Activated CD4-positive, alpha-beta T cell treated with anti-CD3 and anti-CD28 coated beads for 36 hours (primary cell): ENCODE measurements at regions of chr11 and their contacts with region 1.

Region 1: GRCh38 chr11:133927690-133928627 is 28.8 kb downstream of the IGSF9B start:
- DNase-seq: peak; percentile 84
- ATAC-seq: peak; percentile 28
- H3K4me3 Mint-ChIP-seq: peak overlapping the region; percentile 62
- H3K27ac Mint-ChIP-seq: peak overlapping the region; percentile 95
- H3K4me1 Mint-ChIP-seq: peaks cover 33% of the 10 kb centered on the region
- H3K27me3 Mint-ChIP-seq: no peaks in the 10 kb centered on the region

Region 2: DNA sequence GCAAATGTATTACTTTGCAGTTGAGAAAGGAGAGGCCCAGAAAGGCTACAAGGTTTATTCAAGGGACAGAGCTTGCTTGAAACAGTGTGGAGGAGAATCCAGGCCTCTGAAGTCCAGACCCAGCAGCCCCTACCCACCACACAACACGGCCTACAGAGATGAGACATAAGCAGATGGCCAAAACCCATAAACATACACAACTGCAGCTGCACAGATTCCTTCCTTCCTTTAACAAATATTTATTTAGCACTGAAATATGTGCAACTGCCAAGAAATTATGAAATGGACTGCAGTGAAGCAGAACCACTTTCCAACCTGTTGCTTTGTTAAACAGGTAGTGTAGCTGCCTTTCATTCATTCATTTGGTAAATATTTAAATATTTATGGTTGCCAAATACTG is 204.9 kb before region 1 on chr11:
- CTCF ChIA-PET with region 1: no interaction called
- POLR2A ChIA-PET with region 1: no interaction called
- intact Hi-C with region 1: no loop called
- DNase-seq: no peak
- ATAC-seq: no peak
- H3K4me3 Mint-ChIP-seq: no peak overlapping the region
- H3K27ac Mint-ChIP-seq: no peak overlapping the region
- H3K4me1 Mint-ChIP-seq: no peaks in the 10 kb centered on the region
- H3K27me3 Mint-ChIP-seq: no peaks in the 10 kb centered on the region

Region 3: GRCh38 chr11:133956650-133957633 is 29.0 kb after region 1 on chr11 and contains the start of gene IGSF9B:
- CTCF ChIA-PET with region 1: interaction called, 6 read pairs
- POLR2A ChIA-PET with region 1: interaction called, 6 read pairs
- intact Hi-C with region 1: loop called (anchors 1 kb)
- DNase-seq: peak; percentile 95
- ATAC-seq: peak; percentile 91
- H3K4me3 Mint-ChIP-seq: peak within 1 kb of the TSS; percentile 90
- H3K27ac Mint-ChIP-seq: peak within 1 kb of the TSS; percentile 87
- H3K4me1 Mint-ChIP-seq: peaks cover 49% of the 10 kb centered on the region
- H3K27me3 Mint-ChIP-seq: peaks cover 9% of the 10 kb centered on the region
- total RNA-seq, gene IGSF9B: 79.0 to 84.2 TPM

Region 4: DNA sequence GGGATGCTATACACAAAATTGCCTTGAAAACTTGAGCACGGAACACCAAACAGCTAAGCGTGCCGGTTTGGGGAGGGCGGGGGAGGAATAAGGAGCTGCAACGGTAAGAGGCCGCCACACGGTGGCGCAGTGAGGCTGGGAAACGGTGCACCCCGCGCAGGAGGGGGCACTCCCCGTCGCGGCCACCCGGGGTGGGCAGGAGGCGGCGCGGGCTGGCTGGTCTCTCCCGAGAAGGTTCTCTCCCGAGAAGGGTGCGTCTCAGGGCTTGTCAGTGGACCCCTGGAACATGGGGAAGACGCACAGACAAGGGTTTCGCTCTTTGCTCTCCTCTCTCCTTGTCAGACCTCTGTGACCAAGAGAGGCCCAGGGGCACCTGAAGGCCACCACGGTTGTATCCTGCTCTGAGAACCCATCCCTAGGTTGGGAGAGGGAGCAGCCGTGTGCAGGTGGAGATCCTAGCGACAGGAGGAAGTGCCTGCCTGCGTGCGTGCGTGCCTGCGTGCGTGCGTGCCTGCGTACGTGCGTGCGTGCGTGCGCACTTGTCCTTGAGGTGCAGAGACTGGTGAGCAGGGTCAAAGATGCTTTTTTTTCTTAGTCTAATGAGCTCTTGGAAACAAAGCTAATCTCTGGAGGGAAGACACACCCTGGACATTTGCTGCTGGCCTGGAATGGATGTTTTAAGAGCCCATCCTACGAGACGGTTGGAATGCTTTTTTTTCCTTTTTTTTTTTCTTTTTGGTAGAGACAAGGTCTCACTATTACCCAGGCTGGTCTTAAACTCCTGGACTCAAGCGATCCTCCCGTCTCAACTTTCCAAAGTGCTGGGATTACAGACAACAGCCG is 122.8 kb after region 1 on chr11:
- CTCF ChIA-PET with region 1: interaction called, 8 read pairs
- POLR2A ChIA-PET with region 1: interaction called, 7 read pairs
- intact Hi-C with region 1: loop called (anchors 1 to 5 kb)
- DNase-seq: peak; percentile 87
- ATAC-seq: peak; percentile 90
- H3K4me3 Mint-ChIP-seq: no peak overlapping the region
- H3K27ac Mint-ChIP-seq: no peak overlapping the region
- H3K4me1 Mint-ChIP-seq: peaks cover 7% of the 10 kb centered on the region
- H3K27me3 Mint-ChIP-seq: peaks cover 21% of the 10 kb centered on the region

Region 5: DNA sequence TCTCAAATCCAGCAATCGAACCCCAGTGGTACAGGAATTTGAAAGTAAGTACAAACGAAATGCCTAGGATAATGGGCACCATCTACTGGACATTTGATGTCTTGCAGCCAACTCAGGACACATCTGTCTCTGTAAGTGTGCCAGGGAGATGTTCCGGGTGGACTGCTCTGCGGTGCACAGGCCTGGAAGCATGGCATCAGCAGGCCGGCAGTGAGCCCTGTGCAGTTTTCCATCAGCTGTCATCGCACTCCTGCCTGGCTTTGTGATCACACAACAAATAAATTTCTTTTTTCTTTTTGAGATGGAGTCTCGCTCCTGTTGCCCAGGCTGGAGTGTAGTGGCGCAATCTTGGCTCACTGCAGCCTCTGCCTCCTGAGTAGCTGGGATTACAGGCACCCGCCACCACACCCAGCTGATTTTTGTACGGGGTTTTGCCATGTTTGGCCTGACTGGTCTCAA is 211.9 kb after region 1 on chr11:
- CTCF ChIA-PET with region 1: interaction called, 9 read pairs
- POLR2A ChIA-PET with region 1: no interaction called
- intact Hi-C with region 1: loop called (anchors 1 to 2 kb)
- DNase-seq: peak; percentile 67
- ATAC-seq: peak; percentile 87
- H3K4me3 Mint-ChIP-seq: no peak overlapping the region
- H3K27ac Mint-ChIP-seq: no peak overlapping the region
- H3K4me1 Mint-ChIP-seq: peaks cover 15% of the 10 kb centered on the region
- H3K27me3 Mint-ChIP-seq: no peaks in the 10 kb centered on the region

Region 6: DNA sequence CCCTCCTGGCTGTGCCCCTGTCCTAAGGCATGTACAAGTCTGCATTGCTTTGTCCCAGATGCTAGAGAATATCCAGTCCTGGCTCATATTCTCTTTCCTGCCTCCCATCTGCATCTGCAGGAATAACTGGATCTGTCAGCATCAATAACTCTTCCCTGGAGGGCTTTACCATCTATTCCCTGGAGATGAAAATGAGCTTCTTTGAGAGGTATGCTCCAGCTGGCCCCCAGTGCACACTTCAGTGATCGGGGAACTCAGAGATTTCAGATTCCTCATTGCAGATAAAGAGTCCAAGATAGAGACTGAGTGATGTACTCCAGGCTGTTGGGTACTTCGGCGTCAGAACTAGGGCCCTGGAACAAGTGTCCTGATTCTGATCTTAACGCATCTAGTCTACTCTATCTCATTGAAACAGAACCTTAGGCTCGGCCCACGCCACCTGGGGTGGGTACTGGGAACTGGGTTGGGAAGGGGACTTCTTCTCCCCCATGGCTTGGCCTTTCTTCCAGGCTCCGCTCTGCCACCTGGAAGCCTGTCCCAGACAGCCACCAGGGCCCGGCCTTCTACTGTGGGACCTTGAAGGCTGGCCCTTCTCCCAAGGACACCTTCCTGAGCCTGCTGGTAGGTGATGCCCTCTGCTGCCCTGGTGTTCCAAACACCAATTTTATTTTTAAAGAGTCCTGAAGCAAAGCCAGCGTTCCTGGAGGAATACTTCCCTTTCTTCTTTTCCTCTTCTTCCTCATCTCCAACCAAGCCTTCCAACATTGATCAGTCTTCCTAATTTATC is 386.1 kb after region 1 on chr11:
- CTCF ChIA-PET with region 1: no interaction called
- POLR2A ChIA-PET with region 1: no interaction called
- intact Hi-C with region 1: no loop called
- DNase-seq: no peak
- ATAC-seq: no peak
- H3K4me3 Mint-ChIP-seq: no peak overlapping the region
- H3K27ac Mint-ChIP-seq: no peak overlapping the region
- H3K4me1 Mint-ChIP-seq: no peaks in the 10 kb centered on the region
- H3K27me3 Mint-ChIP-seq: peaks cover 2% of the 10 kb centered on the region

Region 7: GRCh38 chr11:134331354-134332188 is 403.6 kb after region 1 on chr11 and contains the start of gene GLB1L2:
- CTCF ChIA-PET with region 1: no interaction called
- POLR2A ChIA-PET with region 1: no interaction called
- intact Hi-C with region 1: loop called in 1 of 2 experiments (anchors 1 kb)
- DNase-seq: peak; percentile 86
- ATAC-seq: peak; percentile 99
- H3K4me3 Mint-ChIP-seq: peak within 1 kb of the TSS; percentile 75
- H3K27ac Mint-ChIP-seq: peak within 1 kb of the TSS; percentile 64
- H3K4me1 Mint-ChIP-seq: peaks cover 12% of the 10 kb centered on the region
- H3K27me3 Mint-ChIP-seq: peaks cover 23% of the 10 kb centered on the region
- total RNA-seq, gene GLB1L2: 3.9 to 4.2 TPM